ENCODE measurements at regions of chr5 and their contacts with region 1.

Region 1: GRCh38 chr5:76771705-76772405 is 47.0 kb upstream of the F2RL1 start:
- DNase-seq: no peak
- CTCF ChIP-seq: no peak

Region 2: GRCh38 chr5:76402886-76403765 is 368.7 kb before region 1 on chr5 and contains the start of gene IQGAP2:
- CTCF ChIA-PET with region 1: interaction called, 12 read pairs
- POLR2A ChIA-PET with region 1: no interaction called
- DNase-seq: peak; percentile 88
- CTCF ChIP-seq: peak; percentile 96

Region 3: GRCh38 chr5:76601470-76601869 is 170.4 kb before region 1 on chr5:
- CTCF ChIA-PET with region 1: interaction called, 145 read pairs
- POLR2A ChIA-PET with region 1: no interaction called
- DNase-seq: peak; percentile 42
- CTCF ChIP-seq: peak; percentile 64

Region 4: GRCh38 chr5:76691467-76692138 is 80.3 kb before region 1 on chr5:
- CTCF ChIA-PET with region 1: interaction called, 12 read pairs
- POLR2A ChIA-PET with region 1: no interaction called
- DNase-seq: no peak
- CTCF ChIP-seq: no peak

Region 5: DNA sequence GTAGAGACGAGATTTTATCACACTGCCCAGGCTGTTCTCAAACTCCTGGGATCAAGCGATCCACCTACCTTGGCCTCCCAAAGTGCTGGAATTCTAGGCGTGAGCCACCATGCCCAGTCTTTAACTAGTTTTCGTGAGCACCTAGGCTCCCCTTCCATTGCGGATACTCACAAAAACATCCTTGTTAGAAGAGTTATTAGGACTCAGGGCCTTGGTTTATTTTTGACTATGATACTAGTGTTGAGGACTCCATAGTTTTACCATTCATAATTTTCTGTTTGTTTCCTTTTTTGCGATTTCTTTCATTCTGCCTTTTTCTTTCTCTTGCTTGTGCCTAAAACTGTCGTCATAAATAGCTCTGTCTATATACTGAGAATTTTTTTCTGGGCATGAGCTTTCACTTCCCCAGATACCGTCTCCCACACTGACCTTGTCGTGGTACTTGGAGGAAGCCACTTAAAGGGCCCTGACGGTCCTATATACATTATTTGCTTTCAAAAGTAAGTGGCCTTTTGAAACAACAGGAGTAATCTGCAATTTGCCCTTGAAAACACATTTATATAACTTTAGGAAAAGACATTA is 50.8 kb before region 1 on chr5:
- CTCF ChIA-PET with region 1: interaction called, 14 read pairs
- POLR2A ChIA-PET with region 1: no interaction called
- DNase-seq: peak; percentile 62
- CTCF ChIP-seq: no peak

Region 6: DNA sequence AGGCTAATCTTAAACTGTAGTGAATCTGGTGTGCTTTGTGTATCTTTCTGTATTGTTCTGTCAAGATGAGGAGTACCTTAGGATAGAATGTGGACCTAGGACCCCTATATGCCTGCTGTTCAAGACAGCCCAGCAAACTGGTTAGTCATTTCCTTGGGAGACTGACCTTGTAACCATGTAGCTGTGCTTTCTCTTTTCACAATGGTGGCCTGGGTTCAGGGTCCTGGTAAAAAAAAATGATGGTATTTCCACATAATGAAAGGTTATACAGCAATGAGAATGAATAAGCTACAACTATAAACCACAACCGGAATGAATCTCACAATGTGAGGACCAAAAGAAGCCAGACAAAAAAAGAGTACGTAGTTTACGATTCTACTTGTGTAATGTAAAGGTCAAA is 10.6 kb after region 1 on chr5:
- CTCF ChIA-PET with region 1: interaction called, 15 read pairs
- POLR2A ChIA-PET with region 1: no interaction called
- DNase-seq: no peak
- CTCF ChIP-seq: no peak

Region 7: DNA sequence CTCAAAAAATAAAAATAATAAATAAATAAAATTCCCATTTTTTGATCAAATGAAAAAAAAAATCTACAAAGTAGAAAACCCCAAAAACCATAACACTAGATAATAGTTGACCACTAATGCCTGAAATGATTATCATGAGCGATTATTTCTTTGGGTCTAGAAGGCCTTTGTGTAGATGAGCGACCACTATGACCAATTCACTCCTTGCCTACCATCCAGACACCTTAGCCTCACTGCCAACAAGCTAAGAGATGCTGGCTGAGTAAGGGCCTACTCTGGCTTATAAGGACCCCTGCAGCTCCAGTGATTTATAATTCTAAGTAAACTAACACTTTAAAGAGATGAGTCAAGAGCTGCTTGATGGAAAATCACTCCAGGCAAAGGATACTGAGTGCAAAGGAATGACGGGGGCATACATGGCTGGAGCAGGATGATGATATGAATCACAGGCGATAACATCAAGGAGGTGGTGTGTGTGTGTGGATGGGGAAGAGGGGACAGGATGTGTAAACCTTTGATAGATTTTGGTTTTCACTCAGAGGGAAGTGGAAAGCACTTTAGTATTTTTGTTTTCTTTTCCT is 42.2 kb after region 1 on chr5:
- CTCF ChIA-PET with region 1: no interaction called
- POLR2A ChIA-PET with region 1: no interaction called
- DNase-seq: no peak
- CTCF ChIP-seq: no peak

Measured in GM10248 (cell line).